ENCODE measurements at regions of chr11 and their contacts with region 1.

Region 1: DNA sequence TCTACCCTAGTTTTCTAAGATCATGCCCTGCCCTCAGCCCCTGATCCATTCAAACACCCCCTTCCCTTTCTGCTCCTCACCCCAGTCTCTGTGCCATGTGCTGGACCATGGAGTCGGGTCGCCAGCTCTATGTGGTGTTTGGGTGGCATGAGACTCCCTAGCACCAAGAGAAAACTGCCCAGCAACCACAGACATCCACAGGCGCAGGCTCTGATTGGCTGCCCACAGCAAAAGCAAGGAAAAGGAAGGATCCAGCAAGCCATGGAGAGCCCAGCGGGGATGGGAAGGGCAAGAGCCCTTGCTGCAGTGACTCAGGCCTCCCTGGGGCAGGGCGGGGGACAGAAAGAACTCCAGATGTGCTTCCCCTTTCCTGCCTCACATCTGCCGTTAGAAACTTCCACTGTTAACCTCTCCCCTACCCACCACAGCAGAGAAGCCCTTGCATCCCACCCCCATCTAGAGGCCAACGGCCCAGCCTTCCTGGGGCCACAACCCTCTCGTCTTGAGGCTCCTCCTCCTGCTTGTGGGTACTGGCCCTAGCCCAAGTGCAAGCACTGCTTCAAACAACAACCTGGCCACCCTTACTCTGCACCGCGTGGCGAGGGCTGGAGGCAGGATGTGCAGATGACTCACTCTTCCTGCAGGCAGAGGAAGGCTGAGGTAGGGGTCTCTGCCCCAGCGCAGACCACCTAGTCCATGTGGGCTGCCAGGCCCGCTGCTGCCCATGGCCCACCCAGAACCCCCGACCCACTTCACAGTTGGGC is 9.7 kb upstream of the AHNAK start:
- DNase-seq: peak; percentile 81
- H3K4me3 ChIP-seq: 0 out of 2 replicates have a peak overlapping the region, but pooled peaks have one; percentile 10
- H3K27me3 ChIP-seq: no peaks in the 10 kb centered on the region
- CTCF ChIP-seq: no peak

Region 2: GRCh38 chr11:62400760-62401159 is 155.5 kb before region 1 on chr11:
- CTCF ChIA-PET with region 1: interaction called, 49 read pairs
- POLR2A ChIA-PET with region 1: interaction called, 4 read pairs
- DNase-seq: peak; percentile 71
- H3K4me3 ChIP-seq: no peak overlapping the region
- H3K27me3 ChIP-seq: no peaks in the 10 kb centered on the region
- CTCF ChIP-seq: no peak

Region 3: DNA sequence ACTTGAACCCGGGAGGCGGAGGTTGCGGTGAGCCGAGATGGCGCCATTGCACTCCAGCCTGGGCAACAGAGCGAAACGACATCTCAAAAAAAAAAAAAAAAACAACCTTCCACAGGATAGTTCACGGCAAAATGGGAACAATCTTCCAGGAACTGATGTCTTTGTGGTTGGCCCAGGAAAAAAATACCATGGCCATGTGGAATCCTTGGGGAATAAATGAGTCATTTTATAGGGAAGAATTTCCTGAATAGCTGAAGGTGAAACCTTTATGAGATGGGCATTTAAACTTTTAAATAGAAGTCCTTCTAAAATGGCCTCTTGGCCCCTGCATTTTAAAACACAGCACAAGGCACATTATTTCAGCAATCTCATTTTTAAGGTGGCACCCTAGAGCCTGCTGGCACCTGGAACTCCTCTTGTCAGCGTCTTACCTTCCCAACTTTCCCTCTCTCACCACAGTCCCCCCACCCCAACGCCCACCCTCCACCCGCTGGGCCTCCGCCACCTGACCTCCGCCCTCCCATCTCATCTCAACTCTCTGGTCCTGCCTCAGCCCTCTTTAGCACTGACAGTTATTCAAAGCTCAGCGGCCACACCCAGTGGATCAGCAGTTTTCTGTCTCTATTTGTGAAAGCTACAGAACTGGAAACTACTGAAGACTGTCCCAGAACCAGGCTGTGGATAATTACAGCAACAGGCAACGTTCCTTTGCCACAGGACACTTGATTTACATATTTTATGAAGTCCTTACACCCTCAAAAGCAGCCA is 94.4 kb before region 1 on chr11:
- CTCF ChIA-PET with region 1: interaction called, 12 read pairs
- POLR2A ChIA-PET with region 1: no interaction called
- DNase-seq: peak; percentile 86
- H3K4me3 ChIP-seq: no peak overlapping the region
- H3K27me3 ChIP-seq: no peaks in the 10 kb centered on the region
- CTCF ChIP-seq: no peak

Region 4: DNA sequence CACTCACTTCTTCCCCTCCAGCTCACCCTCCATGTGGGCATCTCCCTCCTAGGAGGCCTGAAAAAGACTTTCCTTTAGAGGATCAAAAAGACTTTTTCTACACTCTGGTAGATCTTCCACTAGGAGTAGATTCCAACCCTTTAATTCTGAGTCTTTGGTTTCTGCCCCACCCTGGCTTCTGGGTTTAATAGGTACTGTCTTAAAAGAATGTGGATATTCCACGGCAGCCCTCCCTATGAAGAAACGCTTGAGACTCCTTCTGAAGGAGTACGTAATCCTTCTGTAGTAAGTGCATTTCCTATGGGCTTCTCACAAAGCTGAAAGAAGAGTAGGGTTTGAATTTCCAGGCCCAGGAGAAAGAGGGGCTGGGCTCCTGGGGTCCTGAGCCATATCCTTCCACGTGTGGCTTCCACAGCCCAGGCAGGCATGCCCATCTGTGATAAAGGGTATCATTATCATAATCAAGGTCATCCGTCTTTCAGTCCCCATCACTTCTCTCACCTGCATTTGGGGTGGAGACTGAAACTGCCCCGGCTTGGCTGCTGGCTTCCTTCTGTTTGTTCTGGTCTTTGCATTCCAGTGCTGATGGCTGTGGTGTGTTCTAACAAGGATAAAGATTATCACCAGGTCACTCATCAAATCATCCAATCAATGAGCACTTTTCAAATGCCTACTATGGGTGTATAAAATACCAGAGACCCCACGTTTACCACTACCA is 64.9 kb before region 1 on chr11:
- CTCF ChIA-PET with region 1: no interaction called
- POLR2A ChIA-PET with region 1: no interaction called
- DNase-seq: no peak
- H3K4me3 ChIP-seq: no peak overlapping the region
- H3K27me3 ChIP-seq: no peaks in the 10 kb centered on the region
- CTCF ChIP-seq: no peak

Region 5: DNA sequence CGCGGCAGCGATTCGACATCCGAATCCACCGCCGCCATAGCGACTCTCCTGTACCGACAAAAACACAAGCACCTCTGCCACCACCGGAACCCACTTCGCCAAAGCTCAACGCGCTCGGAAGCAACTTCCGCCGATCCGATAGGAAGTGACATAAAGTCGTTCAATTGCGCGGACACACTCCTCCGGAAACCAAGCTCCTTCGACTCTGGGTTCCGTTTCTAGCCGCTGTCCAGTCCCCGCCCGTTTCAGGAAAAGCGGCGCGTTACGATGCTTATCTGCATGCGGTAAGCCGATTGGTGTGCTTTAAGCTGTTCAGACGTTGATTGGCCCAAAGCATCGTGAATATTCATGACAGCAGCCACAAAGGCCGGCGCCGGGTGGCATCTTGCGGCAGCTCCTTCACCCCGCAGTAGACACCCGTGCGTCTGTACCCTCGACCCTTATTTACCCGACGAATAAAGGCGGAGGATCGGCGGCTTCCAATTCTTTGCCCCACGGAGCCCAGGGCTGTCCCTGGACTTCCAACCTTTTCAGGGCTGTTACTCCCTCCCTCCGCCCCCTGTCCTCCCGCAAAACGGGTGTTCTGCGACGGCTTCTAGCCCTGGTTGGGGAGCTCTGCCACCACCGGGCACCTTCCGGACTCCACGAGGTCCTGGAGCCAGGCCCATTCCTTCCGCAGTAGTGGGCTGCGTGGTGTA is 35.3 kb after region 1 on chr11 and contains the start of gene TUT1:
- CTCF ChIA-PET with region 1: interaction called, 8 read pairs
- POLR2A ChIA-PET with region 1: interaction called, 19 read pairs
- DNase-seq: peak; percentile 96
- H3K4me3 ChIP-seq: peak within 1 kb of the TSS; percentile 51
- H3K27me3 ChIP-seq: no peaks in the 10 kb centered on the region
- CTCF ChIP-seq: no peak
- polyA plus RNA-seq, gene TUT1: 6.4 and 9.9 TPM in 2 replicates

Measured in BJ (cell line).